ENCODE measurements at regions of chr15 and their contacts with region 1.

Region 1: DNA sequence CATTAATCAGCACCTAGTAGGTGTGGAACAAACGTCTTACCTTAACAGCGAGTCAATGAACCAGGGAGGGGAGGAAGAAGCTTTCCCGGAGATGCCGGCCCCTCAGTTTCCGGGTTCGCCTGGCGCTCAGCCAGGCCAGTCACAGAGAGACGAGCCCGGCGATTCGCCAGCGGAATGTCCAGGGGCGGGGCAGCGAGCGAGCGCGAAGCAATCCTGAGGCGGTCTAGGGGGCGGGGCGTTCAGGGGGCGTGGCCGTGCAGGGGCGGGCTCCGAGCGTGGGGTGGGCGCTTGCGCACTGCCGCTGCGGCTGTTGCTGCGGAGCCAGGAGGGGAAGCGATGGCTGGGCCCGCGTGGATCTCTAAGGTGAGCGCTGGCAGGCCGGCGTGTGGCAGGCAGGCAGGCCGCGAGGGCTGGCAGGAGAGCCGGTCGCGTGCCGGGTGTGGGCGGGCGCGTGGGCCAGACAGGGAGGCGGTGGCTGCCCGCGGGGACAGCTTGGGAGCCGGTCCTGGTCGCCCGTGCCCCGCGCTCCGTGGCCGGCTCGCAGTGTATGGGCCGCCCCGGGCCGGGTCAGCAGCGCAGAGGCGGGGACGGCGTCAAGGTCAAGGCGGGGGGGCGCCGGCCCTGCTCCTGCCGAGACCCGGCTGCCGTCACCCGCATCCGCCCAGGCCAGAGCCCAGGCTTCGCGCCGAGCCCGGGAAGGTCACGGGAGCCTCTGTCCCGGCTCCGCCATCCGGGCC is at the start of gene IDH3A:
- DNase-seq: peak; percentile 100

Region 2: DNA sequence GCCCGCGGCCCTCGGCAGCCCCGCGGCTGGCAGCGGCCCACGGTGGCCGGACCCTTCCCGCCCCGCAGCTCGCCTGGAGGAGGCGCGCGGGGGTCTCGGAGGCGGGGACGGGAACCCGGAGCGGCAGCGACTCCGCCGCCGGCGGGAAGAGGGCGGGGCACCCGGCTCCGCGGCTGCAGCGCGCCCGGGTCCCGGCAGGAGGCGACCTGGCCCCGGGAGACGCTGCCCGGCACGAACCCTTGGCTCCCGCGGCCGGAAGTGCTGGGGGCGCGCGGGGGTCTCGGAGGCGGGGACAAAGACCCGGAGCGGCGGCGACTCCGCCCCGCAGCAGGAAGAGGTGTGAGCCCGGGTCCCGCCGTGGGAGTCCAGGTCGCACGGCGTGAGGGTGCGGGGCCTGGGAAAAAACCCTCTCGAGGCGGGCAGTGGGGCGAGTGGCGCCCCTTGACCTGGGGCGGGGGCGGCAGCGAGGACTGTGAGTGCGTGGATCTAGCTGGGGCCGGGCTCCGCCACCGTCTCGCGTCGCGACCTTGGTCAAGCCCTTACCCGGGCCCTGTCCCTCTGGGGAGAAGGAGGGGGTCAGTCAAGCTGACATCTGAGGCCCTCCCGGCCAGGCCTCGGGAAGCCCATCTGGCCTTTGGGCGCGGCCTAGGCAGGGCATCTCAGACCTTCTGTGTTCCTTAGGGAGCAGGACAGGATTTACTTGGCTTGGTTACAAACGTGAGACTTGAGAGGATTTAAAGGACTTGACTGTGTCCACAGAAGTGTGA is 17.8 kb before region 1 on chr15 and contains the start of gene CIB2:
- CTCF ChIA-PET with region 1: interaction called, 4 read pairs
- POLR2A ChIA-PET with region 1: interaction called, 40 read pairs
- DNase-seq: peak; percentile 95

Region 3: DNA sequence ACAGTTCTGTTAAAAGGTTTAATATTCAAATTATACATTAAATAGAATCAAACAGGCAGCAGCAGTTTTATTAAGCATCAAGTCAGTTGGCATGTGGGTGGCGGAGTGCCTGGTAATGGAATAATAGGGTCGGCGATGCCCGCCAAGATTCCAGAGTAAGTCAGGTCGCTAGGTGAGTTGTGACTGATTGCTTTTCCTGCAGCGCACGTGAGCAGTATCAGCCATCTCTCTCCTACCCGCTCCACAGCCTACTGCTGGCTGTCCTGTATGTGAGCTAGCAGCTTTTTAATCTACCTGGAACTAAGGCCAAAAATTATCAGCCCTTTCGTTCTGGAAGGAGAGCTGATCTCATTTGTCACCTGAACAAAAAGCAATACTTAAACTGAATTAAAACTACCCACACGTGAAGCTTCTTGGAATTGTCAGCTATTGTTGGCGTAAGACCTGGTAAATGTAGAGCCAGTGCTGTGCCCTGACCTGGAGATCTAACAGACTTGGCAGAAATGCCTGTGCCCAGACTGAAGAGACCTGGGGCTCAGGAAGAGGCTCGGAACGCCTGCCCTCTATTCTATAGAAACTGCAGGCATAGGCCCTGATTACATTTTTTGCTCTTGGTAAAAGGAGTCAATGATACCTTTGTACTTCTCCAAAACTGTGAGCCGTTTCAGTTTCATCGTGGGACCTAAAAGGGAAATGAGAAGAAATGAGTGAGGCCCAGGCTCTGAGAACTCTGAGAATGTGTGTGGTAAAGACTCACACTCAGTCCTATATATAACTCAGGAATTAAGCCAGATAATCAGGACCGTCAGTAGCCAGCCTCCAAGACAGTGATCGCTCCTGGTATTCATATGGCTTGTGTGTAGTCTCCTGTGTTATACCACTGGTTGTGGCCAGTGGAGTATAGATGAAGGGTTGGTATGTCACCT is 21.9 kb after region 1 on chr15:
- CTCF ChIA-PET with region 1: no interaction called
- POLR2A ChIA-PET with region 1: no interaction called
- DNase-seq: no peak

Measured in HEK293T (cell line).